ENCODE measurements at regions of chr7 and their contacts with region 1.

Region 1: GRCh38 chr7:37698276-37698675 is 14.7 kb downstream of the GPR141 start:
- DNase-seq: no peak
- ATAC-seq: no peak
- H3K4me3 ChIP-seq: no peak overlapping the region
- H3K27ac ChIP-seq: no peak overlapping the region
- H3K4me1 ChIP-seq: no peaks in the 10 kb centered on the region
- H3K27me3 ChIP-seq: no peaks in the 10 kb centered on the region; the same call in 1 of the 2 replicates
- CTCF ChIP-seq: no peak
- POLR2A ChIP-seq: no peak
- RAD21 ChIP-seq: no peak

Region 2: GRCh38 chr7:37315772-37316715 is 382.2 kb before region 1 on chr7:
- CTCF ChIA-PET with region 1: no interaction called
- POLR2A ChIA-PET with region 1: no interaction called
- RAD21 ChIA-PET with region 1: no interaction called
- intact Hi-C with region 1: loop called (anchors 5 kb)
- DNase-seq: no peak
- ATAC-seq: no peak
- H3K4me3 ChIP-seq: no peak overlapping the region
- H3K27ac ChIP-seq: no peak overlapping the region
- H3K4me1 ChIP-seq: no peaks in the 10 kb centered on the region
- H3K27me3 ChIP-seq: peaks cover 16% of the 10 kb centered on the region; the same call in 1 of the 2 replicates
- CTCF ChIP-seq: no peak
- POLR2A ChIP-seq: no peak
- RAD21 ChIP-seq: no peak

Measured in HCT116 (cell line).